ENCODE measurements at regions of chr2 and their contacts with region 1.

Region 1: GRCh38 chr2:10790228-10790979 is 22.2 kb downstream of the PDIA6 start:
- DNase-seq: no peak
- CTCF ChIP-seq: no peak

Region 2: DNA sequence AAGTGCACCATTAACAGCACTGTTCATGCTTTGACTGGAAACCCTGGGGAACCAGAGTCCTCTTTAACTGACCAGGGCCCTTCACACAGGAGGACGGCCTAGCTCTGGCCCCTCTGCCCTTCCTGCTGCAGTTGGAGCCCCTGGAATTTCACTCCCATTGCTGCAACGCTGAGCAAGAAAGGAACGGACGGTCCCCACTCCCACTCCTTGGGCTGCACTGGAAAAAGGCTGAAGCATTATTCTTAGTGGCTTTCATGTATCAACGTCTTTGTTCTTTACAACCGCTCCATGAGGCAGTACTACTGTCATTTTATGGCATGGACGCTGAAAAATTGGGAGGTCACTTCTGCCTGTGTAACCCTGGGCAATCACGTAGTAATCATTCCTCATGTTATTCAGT is 12.3 kb after region 1 on chr2:
- CTCF ChIA-PET with region 1: interaction called, 10 read pairs
- POLR2A ChIA-PET with region 1: no interaction called
- DNase-seq: no peak
- CTCF ChIP-seq: no peak